HEK293 (cell line): ENCODE measurements at regions of chrX and their contacts with region 1.

Region 1: GRCh38 chrX:38627683-38628082 is 66.3 kb downstream of the TSPAN7 start:
- H3K4me3 ChIP-seq: no peak overlapping the region
- H3K27ac ChIP-seq: no peak overlapping the region
- H3K4me1 ChIP-seq: no peaks in the 10 kb centered on the region
- CTCF ChIP-seq: no peak

Region 2: DNA sequence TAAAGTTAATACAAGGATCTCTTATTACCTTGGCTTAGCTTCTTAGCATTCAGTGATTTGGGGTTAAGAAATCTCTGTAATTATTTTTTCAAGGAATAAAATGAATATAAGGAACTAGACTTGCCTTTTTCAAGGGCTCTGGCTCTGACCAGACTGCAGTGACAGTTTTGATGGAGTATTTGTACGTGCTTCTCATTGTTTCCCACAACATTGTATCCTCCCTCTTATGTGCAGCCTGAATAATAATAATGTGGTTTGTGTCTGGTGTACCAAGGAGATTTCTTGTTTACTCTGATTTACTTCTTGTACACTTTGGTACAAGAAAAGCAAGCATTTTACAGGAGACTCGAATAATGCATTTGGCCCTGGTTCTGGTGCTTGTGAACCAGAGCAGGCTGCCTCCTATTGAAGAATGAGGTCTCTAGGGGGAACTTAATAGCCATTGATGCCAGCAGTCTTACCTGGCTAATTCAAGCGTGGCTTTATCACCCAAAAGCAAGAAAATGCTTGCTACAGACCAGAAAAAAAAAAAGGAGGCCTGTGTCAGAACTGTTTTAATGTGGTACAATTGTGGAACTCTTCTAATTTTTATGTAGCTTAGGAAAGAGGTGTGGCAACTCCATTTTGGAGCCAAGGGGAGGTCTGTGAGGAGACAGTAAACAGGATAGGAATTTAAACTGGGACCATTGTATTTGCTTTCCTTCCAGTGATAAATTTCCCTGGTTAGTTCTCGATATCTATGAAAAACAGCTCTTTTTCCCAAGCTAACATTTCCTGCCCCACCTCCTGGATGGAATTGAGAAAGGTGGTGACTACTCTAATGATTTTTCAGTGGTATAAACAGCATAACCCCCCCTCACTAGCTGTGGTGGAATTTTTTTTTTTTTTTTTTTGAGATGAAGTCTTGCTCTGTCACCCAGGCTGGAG is 269.7 kb before region 1 on chrX:
- CTCF ChIA-PET with region 1: no interaction called
- POLR2A ChIA-PET with region 1: no interaction called
- H3K4me3 ChIP-seq: no peak overlapping the region
- H3K27ac ChIP-seq: no peak overlapping the region
- H3K4me1 ChIP-seq: no peaks in the 10 kb centered on the region
- CTCF ChIP-seq: no peak

Region 3: DNA sequence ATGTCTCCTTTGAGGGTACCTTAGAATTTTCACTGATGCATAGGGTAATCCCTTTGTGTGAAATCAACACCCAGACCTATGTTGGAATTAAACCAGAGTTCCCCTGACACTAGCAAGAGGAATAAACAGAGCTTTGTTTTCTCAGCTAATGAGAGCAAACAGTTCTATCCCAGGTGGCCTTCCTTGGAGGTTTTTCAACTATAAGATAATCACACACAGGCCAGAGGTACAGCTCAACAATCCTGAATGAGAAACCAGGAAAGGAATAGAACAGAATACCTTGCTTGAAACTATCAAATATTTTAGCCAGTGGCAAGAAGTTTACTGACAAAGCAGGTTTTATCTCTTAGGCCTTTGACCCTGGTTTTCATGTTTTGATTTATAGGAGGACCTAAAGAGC is 175.1 kb before region 1 on chrX:
- CTCF ChIA-PET with region 1: no interaction called
- POLR2A ChIA-PET with region 1: no interaction called
- H3K4me3 ChIP-seq: no peak overlapping the region
- H3K27ac ChIP-seq: no peak overlapping the region
- H3K4me1 ChIP-seq: no peaks in the 10 kb centered on the region
- CTCF ChIP-seq: no peak

Region 4: DNA sequence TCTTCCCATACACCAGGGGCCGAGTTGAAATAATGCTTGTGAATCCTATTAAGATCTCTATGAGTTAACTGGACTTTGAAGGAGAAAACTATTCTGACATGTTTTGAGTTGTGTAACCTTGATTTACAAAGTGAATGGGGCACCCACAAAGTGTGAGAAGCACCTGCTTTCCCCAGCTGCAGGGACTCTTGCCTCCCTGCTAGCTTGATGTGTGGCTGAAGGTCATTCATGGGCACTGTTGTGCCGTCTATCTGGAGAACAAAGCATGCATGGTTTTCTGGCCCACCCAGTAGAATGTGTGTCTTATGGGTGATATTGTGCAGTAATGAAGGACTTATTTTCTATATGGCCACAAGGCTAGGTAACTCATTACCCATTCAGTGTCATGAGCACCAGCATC is 13.2 kb before region 1 on chrX:
- CTCF ChIA-PET with region 1: interaction called, 18 read pairs
- POLR2A ChIA-PET with region 1: interaction called, 3 read pairs
- H3K4me3 ChIP-seq: no peak overlapping the region
- H3K27ac ChIP-seq: no peak overlapping the region
- H3K4me1 ChIP-seq: no peaks in the 10 kb centered on the region
- CTCF ChIP-seq: no peak